ENCODE measurements at regions of chr15 and their contacts with region 1.

Region 1: GRCh38 chr15:42920519-42921227 is at the start of gene TTBK2:
- DNase-seq: peak; percentile 99
- total RNA-seq, gene TTBK2: 28.0 TPM

Region 2: DNA sequence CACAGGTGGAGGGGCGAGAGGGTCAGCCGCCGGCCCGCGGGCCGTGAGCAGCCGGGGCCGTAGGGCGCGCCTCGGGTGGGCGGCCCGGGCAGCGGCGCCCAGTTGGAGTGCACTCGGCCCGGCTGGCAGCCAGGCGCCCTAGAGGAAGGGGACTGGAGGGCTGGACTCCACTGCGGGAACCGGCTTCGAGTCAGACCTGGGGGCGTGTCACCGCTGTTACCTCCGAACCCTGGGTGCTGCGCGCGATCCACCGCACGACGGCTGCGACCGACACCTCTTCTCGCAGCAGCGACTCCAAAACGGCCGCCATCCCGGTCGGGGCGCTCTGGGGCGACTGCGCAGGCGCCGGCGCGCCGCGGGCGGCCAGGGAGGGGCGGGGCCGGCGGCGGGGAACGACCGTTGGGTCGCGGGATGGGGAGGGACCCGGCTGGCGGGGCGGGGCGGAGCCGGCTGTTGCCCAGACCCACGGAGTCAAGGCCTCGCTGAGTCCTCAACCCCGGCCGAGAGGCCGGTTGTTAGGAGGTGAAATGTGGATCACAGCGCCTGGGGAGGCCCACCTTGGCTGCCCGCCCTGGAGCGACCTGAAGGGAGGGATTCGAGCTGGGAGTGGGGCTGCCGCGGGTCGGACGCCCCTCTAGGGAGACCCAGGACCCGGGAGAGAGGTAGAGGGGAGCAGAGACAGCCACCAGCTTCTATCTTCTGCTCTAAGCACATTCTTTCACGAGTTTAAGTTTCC is 183.7 kb before region 1 on chr15 and contains the start of gene CDAN1:
- intact Hi-C with region 1: loop called (anchors 2 kb)
- DNase-seq: peak; percentile 96
- total RNA-seq, gene CDAN1: 6.5 TPM

Region 3: DNA sequence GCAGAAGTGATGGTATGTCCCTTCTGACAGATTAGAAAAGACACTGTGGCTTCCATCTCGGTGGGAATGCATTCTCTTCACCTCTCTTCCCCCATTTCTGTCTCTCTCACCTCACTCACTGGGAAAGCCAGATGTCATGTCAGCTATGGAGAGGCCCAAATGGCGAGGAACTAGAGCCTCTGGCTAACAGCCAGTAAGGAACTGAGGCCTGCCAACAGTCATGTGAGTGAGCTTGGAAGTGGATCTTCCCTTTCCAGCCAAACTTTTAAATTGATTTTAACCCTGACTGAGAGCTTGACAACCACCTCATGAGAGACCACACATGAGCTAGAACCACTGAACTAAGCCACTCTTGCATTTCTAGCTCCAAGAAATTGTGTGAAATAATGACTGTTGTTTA is 148.5 kb before region 1 on chr15:
- intact Hi-C with region 1: no loop called
- DNase-seq: no peak

Region 4: DNA sequence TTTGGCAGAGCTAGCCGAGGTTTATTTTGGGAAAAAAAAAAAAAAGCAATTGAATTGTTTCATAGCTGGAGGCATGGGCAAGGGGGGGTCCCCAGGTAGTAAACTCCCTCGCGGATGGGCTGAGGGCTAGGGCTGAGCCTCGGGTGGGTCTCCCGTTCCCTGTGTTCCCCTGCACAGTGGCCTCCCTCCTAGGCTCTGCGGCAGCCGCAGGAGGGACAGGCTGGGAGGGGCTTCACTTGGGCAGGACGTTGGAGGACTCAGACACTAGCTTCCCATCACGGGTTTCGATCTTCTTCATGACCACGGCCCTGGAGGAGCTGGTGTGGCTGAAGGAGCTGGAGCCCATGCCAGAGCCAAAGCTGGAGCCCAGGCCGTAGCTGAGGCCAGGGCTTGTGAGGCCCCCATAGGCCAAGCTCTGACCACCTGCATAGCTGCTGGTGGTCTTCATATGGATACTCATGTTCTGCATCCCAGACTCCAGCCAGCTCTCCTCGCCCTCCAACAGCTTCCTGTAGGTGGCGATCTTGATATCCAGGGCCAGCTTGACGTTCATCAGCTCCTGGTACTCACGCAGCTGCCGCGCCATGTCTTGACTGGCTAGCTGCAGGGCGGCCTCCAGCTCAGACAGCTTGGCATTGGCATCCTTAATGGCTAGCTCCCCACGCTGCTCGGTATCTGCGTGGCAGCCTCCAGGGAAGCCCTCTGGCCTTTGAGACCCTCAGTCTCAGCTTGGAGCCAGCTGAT is 119.8 kb before region 1 on chr15:
- intact Hi-C with region 1: loop called (anchors 2 kb)
- DNase-seq: no peak